ENCODE measurements at regions of chr20 and their contacts with region 1.

Region 1: GRCh38 chr20:62302341-62303058 is at the start of gene ADRM1:
- DNase-seq: peak; percentile 97 to 98
- ATAC-seq: peak; percentile 84 to 87 (median 85)
- H3K4me3 ChIP-seq: peak within 1 kb of the TSS; percentile 84
- H3K27ac ChIP-seq: peak within 1 kb of the TSS; percentile 99
- H3K4me1 ChIP-seq: peaks cover 28% of the 10 kb centered on the region
- H3K27me3 ChIP-seq: no peaks in the 10 kb centered on the region
- CTCF ChIP-seq: peak; percentile 95
- total RNA-seq, gene ADRM1: 142 to 280 (median 238) TPM

Region 2: GRCh38 chr20:62136283-62137091 is 166.0 kb before region 1 on chr20:
- intact Hi-C with region 1: no loop called
- DNase-seq: peak; percentile 67 to 83
- ATAC-seq: peak in 2 of 4 donors; percentile 33 to 34
- H3K4me3 ChIP-seq: no peak overlapping the region
- H3K27ac ChIP-seq: peak overlapping the region; percentile 67
- H3K4me1 ChIP-seq: peaks cover 42% of the 10 kb centered on the region
- H3K27me3 ChIP-seq: no peaks in the 10 kb centered on the region
- CTCF ChIP-seq: peak; percentile 74

Region 3: GRCh38 chr20:62274332-62274950 is 28.1 kb before region 1 on chr20:
- intact Hi-C with region 1: no loop called
- DNase-seq: no peak
- ATAC-seq: no peak
- H3K4me3 ChIP-seq: no peak overlapping the region
- H3K27ac ChIP-seq: peak overlapping the region; percentile 49
- H3K4me1 ChIP-seq: peaks cover 24% of the 10 kb centered on the region
- H3K27me3 ChIP-seq: no peaks in the 10 kb centered on the region
- CTCF ChIP-seq: no peak

Region 4: GRCh38 chr20:62352402-62353288 is 50.1 kb after region 1 on chr20:
- intact Hi-C with region 1: loop called in 1 of 2 experiments (anchors 5 kb)
- DNase-seq: peak; percentile 91 to 96
- ATAC-seq: peak; percentile 82 to 87 (median 86)
- H3K4me3 ChIP-seq: peak overlapping the region; percentile 34
- H3K27ac ChIP-seq: peak overlapping the region; percentile 82
- H3K4me1 ChIP-seq: peaks cover 51% of the 10 kb centered on the region
- H3K27me3 ChIP-seq: no peaks in the 10 kb centered on the region
- CTCF ChIP-seq: peak; percentile 38

Region 5: DNA sequence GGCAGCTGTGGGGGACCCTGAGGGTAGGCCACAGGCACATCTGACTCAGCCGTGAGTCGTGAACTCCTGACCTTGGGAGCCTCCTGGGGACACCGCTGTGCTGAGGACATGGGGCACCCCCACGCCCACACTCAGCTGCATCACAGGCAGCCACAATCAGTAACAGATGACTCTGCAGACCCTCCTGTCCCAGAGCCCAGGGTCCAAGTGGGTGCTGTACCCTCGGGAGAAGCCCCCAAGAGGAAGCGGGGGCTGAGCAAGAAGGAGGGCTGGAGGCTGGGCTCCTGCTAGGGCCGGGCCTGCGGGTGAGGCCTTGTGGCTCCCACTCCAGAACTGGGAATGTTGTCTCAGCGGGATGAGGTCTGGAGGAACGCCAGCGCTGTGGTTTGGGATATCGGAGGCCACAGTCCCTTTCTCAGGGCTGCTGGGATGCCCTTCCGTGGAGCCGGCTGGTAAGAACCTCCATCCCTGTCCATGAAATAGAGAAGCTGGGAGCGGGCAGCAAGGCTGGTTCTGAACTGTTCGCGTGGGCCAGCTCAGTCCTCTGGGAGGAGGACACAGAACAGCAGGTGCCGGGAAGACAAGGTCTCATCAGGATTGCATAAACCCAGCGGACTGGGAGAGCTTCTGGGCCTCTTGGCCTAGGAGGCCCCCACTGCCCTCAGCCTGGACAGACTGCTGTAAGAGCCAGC is 67.8 kb after region 1 on chr20:
- intact Hi-C with region 1: loop called in 1 of 2 experiments (anchors 5 kb)
- DNase-seq: peak in 1 of 2 donors; percentile 45
- ATAC-seq: peak in 1 of 4 donors; percentile 9
- H3K4me3 ChIP-seq: no peak overlapping the region
- H3K27ac ChIP-seq: peak overlapping the region; percentile 87
- H3K4me1 ChIP-seq: peaks cover 45% of the 10 kb centered on the region
- H3K27me3 ChIP-seq: no peaks in the 10 kb centered on the region
- CTCF ChIP-seq: no peak

Region 6: GRCh38 chr20:62386383-62387218 is 84.1 kb after region 1 on chr20 and contains the start of gene RPS21:
- intact Hi-C with region 1: loop called (anchors 1 to 2 kb)
- DNase-seq: peak; percentile 94 to 98
- ATAC-seq: peak; percentile 92 to 94 (median 94)
- H3K4me3 ChIP-seq: peak within 1 kb of the TSS; percentile 88
- H3K27ac ChIP-seq: peak within 1 kb of the TSS; percentile 96
- H3K4me1 ChIP-seq: peaks cover 26% of the 10 kb centered on the region
- H3K27me3 ChIP-seq: no peaks in the 10 kb centered on the region
- CTCF ChIP-seq: no peak
- total RNA-seq, gene RPS21: 602 to 1,206 (median 1,044) TPM